ENCODE measurements at regions of chr4 and their contacts with region 1.

Region 1: GRCh38 chr4:153142700-153143438 is 61.4 kb upstream of the TRIM2 start:
- DNase-seq: peak; percentile 73
- ATAC-seq: peak; percentile 65
- H3K4me3 Mint-ChIP-seq: no peak overlapping the region
- H3K27ac Mint-ChIP-seq: no peak overlapping the region
- H3K4me1 Mint-ChIP-seq: peaks cover 36% of the 10 kb centered on the region
- H3K27me3 Mint-ChIP-seq: no peaks in the 10 kb centered on the region
- CTCF ChIP-seq: peak; percentile 56; the same call in 1 of the 2 replicates

Region 2: GRCh38 chr4:152817331-152817730 is 325.5 kb before region 1 on chr4:
- CTCF ChIA-PET with region 1: no interaction called
- POLR2A ChIA-PET with region 1: no interaction called
- DNase-seq: no peak
- ATAC-seq: no peak
- H3K4me3 Mint-ChIP-seq: no peak overlapping the region
- H3K27ac Mint-ChIP-seq: no peak overlapping the region
- H3K4me1 Mint-ChIP-seq: peaks cover 29% of the 10 kb centered on the region
- H3K27me3 Mint-ChIP-seq: no peaks in the 10 kb centered on the region
- CTCF ChIP-seq: no peak

Region 3: GRCh38 chr4:153083447-153083947 is 59.4 kb before region 1 on chr4:
- CTCF ChIA-PET with region 1: interaction called, 14 read pairs
- POLR2A ChIA-PET with region 1: no interaction called
- DNase-seq: peak; percentile 68
- ATAC-seq: peak; percentile 87
- H3K4me3 Mint-ChIP-seq: no peak overlapping the region
- H3K27ac Mint-ChIP-seq: peak overlapping the region; percentile 60
- H3K4me1 Mint-ChIP-seq: peaks cover 56% of the 10 kb centered on the region
- H3K27me3 Mint-ChIP-seq: peaks cover 14% of the 10 kb centered on the region; the same call in 1 of the 2 replicates
- CTCF ChIP-seq: no peak

Region 4: DNA sequence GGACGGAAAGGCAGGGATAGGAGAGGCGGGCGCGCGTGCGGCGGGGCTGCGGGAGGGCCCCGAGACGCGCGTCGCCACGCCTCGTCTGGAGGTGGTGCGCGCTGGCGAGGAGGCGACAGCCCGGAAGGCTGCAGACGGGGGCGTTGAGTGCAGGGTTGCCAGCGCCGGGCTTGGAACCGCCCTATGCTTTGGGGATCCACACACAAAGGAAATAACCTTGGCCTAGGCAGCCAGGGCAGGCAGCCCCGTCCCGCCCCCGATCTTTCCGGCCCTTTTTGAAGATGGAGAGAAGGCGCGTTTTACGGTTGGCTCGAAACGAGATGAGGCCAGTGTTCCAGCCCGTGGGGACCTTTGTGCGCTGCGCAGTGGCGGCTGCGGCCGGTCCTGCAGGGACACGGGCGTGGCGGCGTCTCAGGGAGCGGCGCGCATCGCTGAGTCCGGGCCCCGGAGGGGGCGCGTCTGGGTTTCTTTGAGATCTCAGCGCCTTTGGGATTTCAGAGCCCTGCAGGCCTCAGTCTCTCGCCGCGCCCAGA is 10.5 kb after region 1 on chr4:
- CTCF ChIA-PET with region 1: interaction called, 19 read pairs
- POLR2A ChIA-PET with region 1: interaction called, 3 read pairs
- DNase-seq: peak; percentile 68
- ATAC-seq: peak; percentile 80
- H3K4me3 Mint-ChIP-seq: peak overlapping the region; percentile 78
- H3K27ac Mint-ChIP-seq: no peak overlapping the region
- H3K4me1 Mint-ChIP-seq: peaks cover 56% of the 10 kb centered on the region
- H3K27me3 Mint-ChIP-seq: peaks cover 71% of the 10 kb centered on the region
- CTCF ChIP-seq: no peak

Region 5: DNA sequence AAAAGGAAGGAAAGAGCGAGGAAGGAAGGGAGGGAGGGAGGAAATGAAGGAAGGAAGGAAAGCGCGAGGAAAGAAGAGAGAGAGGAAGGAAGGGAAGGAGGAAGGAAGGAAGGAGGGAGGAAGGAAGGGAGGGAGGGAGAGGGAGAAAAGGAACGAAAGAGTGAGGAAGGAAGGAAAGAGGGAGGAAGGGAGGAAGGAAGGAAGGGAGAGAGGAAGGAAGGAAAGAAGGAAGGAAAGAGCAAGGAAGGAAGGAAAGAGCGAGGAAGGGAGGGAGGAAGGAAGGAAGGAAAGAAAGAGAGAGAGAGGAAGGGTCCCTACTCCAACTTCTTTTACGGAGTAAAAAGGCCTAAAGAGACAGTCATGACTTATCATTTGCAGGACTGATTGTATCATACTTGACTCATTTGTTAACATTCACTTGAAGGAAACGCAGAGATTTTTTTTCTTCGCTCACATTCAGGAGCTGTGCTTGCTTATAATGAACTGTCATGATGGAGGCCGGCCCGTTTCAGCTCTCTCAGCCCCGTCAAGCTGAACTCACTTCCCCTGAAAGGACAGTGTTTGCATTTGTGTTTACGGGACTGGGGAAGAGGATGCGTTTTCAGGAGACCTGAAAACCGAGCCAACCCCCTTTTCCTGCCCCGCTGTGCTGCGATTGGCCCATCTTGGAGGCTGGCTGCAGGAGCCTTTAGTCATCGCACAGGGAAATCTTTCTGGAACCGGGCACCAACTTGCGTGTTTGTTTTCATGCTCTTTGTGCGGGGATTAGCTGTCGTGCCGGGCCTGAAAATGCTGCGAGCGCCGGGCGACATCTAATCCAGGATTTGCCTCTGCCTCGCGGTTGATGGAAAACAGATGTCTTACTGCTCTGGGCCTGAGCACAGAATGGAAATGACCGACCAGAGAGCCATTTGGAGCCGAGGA is 79.2 kb after region 1 on chr4:
- CTCF ChIA-PET with region 1: interaction called, 16 read pairs
- POLR2A ChIA-PET with region 1: no interaction called
- DNase-seq: peak; percentile 60
- ATAC-seq: peak; percentile 83
- H3K4me3 Mint-ChIP-seq: peak overlapping the region; percentile 86
- H3K27ac Mint-ChIP-seq: peak overlapping the region; percentile 75
- H3K4me1 Mint-ChIP-seq: peaks cover 29% of the 10 kb centered on the region
- H3K27me3 Mint-ChIP-seq: peaks cover 22% of the 10 kb centered on the region
- CTCF ChIP-seq: no peak

Region 6: GRCh38 chr4:153310793-153311192 is 167.9 kb after region 1 on chr4:
- CTCF ChIA-PET with region 1: interaction called, 10 read pairs
- POLR2A ChIA-PET with region 1: no interaction called
- DNase-seq: no peak
- ATAC-seq: no peak
- H3K4me3 Mint-ChIP-seq: no peak overlapping the region
- H3K27ac Mint-ChIP-seq: 0 out of 2 replicates have a peak overlapping the region, but pooled peaks have one; percentile 20
- H3K4me1 Mint-ChIP-seq: 0 out of 2 replicates have a peak, but pooled peaks cover 3% of the 10 kb centered on the region
- H3K27me3 Mint-ChIP-seq: no peaks in the 10 kb centered on the region
- CTCF ChIP-seq: no peak

Region 7: DNA sequence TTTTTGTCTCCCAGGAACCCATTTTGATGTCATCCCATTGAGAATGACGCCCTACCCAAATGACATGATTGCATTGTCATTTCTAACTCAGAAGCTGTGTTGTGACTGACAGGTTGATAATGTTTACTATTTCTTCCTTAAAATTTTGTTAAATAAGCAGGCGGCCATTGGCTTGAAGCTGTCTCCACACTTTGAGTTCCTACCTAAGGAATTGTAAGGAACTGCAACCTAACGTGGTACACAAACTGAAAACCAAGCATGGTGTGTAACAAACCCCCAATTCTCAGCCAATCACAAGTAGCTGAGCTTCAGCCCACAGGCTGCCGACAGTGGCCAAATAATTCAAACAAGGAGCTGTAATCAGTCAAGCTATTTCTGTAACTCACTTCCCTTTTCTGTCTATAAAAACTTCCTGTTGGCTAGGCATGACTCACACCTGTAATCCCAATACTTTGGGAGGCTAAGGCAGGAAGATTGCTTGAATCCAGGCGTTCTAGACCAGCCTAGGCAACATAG is 198.8 kb after region 1 on chr4:
- CTCF ChIA-PET with region 1: interaction called, 14 read pairs
- POLR2A ChIA-PET with region 1: no interaction called
- DNase-seq: no peak
- ATAC-seq: no peak
- H3K4me3 Mint-ChIP-seq: no peak overlapping the region
- H3K27ac Mint-ChIP-seq: no peak overlapping the region
- H3K4me1 Mint-ChIP-seq: peaks cover 14% of the 10 kb centered on the region
- H3K27me3 Mint-ChIP-seq: no peaks in the 10 kb centered on the region
- CTCF ChIP-seq: no peak

Region 8: DNA sequence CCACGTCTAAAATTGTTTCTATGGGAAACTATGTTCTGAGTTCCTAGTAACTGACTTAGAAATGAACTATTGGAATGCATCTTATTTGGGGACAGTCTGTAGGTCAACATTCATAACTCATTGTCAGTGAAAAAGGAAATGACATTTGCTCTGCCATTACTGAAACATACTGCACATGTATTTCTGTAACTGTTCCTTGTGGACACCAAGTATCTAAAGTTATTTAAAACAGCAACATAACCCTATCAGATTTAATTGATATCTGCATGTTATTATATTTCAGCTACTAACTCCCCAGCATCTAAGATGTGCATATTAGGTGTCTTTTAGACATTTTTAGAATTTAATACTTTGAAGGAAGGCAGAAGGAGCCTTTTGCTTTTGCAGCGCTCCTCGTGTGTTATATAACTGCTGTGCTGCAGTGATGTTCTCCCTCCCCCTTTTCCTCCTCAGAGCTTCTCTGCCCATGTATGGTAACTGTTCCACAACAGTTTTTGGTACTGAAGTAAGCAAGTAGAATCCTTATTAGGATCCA is 286.1 kb after region 1 on chr4:
- CTCF ChIA-PET with region 1: no interaction called
- POLR2A ChIA-PET with region 1: no interaction called
- DNase-seq: no peak
- ATAC-seq: no peak
- H3K4me3 Mint-ChIP-seq: no peak overlapping the region
- H3K27ac Mint-ChIP-seq: no peak overlapping the region
- H3K4me1 Mint-ChIP-seq: peaks cover 7% of the 10 kb centered on the region
- H3K27me3 Mint-ChIP-seq: no peaks in the 10 kb centered on the region
- CTCF ChIP-seq: no peak